Ascending aorta (tissue), 2 donors: ENCODE measurements at regions of chr16 and their contacts with region 1.

Region 1: GRCh38 chr16:84277237-84277823 is 17.3 kb upstream of the WFDC1 start:
- DNase-seq: peak in 1 of 2 donors; percentile 70
- H3K4me3 ChIP-seq: no peak overlapping the region
- H3K27ac ChIP-seq: no peak overlapping the region
- H3K4me1 ChIP-seq: no peaks in the 10 kb centered on the region
- H3K27me3 ChIP-seq: no peaks in the 10 kb centered on the region
- CTCF ChIP-seq: peak; percentile 66 to 77 (median 69)

Region 2: GRCh38 chr16:84308120-84308519 is 30.8 kb after region 1 on chr16:
- intact Hi-C with region 1: loop called (anchors 1 kb)
- DNase-seq: no peak
- H3K4me3 ChIP-seq: no peak overlapping the region
- H3K27ac ChIP-seq: no peak overlapping the region
- H3K4me1 ChIP-seq: peaks cover 0 to 4% of the 10 kb centered on the region in 2 donors
- H3K27me3 ChIP-seq: no peaks in the 10 kb centered on the region
- CTCF ChIP-seq: peak; percentile 24 to 47 (median 34)

Region 3: DNA sequence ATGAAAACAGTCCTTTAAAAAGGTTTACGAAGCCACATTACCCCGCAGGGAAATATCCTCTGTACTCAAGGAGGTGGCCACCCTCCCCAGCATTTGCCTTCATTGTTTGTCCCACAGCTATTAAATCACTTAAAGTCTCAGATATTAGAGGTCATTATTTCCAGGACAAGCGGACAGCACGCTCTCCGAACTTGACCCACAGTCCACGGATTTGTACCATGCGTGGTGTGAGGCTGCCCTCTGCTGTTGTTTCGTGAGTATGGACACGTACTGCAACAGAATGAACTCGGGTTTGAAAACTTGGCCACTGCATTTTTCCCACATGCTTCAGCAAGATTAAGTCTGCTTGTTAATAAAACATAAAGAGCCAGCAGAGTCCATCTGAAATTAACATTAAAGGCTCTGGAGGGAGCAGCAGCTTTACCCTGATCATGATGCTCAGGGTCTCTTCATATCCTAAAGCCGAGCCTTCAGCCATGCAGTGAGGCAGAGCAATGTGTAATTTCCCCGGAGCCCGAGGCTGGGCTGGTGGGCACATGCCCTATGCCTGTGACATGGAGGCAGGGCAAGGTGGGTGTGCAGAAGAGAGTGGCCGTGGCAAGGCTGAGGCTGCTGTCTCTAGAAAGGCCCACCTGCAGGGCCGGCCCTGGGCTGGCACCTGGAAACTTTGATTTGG is 207.4 kb after region 1 on chr16:
- intact Hi-C with region 1: loop called (anchors 2 kb)
- DNase-seq: no peak
- H3K4me3 ChIP-seq: no peak overlapping the region
- H3K27ac ChIP-seq: no peak overlapping the region
- H3K4me1 ChIP-seq: no peaks in the 10 kb centered on the region
- H3K27me3 ChIP-seq: no peaks in the 10 kb centered on the region
- CTCF ChIP-seq: peak; percentile 35 to 62 (median 40)